GM13977 (cell line): ENCODE measurements at regions of chr9 and their contacts with region 1.

Region 1: DNA sequence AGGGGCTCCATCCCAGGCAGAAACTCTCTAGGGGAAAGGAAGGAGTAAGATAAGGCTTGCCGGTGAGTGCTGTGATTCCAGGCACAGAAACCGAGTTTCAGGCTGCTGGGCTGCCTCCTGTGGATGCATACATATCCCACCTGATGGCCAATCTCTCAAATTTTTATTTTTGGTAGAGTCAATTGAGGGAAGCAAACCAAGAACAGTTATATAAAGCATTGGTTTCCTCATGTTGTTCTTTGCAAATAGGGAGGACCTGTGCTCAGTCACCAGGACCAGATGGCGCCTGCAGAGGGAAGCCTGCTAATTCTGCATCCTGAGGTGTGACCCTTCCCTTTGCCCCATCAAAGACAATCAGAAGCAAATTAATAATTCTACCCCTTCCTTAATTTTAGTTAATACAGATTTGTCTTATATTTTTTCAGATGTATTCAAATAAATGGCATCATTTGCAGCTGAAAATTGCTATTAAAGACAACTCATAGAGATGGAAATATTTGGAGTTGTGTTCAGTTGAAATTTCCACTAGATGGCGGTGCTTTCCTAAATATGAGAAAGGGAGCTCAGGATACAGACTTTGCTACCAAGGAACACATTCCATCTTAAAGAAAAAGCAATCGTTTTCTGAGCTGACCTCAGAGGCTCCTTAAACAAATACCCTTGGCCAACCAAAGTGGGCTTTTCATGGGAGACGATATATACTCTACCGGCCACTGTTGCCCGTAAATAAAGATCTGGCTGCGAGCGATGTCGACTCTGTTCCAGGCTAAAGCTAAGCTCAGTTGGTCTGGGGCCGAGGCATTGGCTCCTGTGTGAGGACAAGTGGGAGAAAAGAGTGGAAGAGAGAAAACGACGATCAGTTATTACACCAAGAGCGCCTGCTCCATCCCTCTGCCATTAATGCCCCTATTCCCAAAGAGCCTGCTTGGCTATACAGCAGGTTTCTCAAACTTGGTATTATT is 225.7 kb upstream of the KLF9 start:
- DNase-seq: no peak
- CTCF ChIP-seq: peak; percentile 46

Region 2: GRCh38 chr9:70534061-70534460 is 106.1 kb before region 1 on chr9:
- in situ Hi-C with region 1: no loop called
- DNase-seq: no peak
- CTCF ChIP-seq: no peak

Region 3: GRCh38 chr9:71001780-71002386 is 361.7 kb after region 1 on chr9:
- in situ Hi-C with region 1: loop called (anchors 25 kb)
- DNase-seq: peak; percentile 15
- CTCF ChIP-seq: peak; percentile 59

Region 4: DNA sequence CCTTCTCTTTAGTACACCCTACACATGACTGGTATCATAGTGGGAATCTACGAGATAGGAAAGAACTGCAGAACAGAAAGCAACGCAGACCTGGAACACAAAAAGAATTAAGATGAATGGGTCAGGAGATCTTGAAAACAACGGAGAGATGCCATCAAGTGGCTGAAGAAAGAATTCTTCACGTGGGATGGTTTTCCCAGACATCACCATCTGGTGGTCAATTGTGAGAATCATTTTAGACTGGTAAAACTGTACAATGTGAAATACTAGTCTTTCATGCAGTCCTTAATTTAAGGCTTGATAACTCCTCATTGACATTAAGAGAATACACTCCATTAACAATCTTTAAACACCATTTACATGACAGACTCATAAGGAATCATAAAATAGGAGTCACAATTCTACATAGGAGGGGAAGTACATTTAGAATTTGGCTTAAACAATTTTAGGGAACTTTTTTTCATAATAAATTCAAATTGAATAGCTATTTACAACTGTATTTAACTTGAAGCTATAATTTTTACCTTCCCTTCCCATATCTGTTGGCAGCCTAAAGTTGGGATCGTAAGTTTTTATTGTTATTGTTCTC is 609.7 kb after region 1 on chr9:
- in situ Hi-C with region 1: loop called (anchors 25 kb)
- DNase-seq: peak; percentile 27
- CTCF ChIP-seq: peak; percentile 52